Stomach (tissue), 19 donors: ENCODE measurements at regions of chr11 and their contacts with region 1.

Region 1: DNA sequence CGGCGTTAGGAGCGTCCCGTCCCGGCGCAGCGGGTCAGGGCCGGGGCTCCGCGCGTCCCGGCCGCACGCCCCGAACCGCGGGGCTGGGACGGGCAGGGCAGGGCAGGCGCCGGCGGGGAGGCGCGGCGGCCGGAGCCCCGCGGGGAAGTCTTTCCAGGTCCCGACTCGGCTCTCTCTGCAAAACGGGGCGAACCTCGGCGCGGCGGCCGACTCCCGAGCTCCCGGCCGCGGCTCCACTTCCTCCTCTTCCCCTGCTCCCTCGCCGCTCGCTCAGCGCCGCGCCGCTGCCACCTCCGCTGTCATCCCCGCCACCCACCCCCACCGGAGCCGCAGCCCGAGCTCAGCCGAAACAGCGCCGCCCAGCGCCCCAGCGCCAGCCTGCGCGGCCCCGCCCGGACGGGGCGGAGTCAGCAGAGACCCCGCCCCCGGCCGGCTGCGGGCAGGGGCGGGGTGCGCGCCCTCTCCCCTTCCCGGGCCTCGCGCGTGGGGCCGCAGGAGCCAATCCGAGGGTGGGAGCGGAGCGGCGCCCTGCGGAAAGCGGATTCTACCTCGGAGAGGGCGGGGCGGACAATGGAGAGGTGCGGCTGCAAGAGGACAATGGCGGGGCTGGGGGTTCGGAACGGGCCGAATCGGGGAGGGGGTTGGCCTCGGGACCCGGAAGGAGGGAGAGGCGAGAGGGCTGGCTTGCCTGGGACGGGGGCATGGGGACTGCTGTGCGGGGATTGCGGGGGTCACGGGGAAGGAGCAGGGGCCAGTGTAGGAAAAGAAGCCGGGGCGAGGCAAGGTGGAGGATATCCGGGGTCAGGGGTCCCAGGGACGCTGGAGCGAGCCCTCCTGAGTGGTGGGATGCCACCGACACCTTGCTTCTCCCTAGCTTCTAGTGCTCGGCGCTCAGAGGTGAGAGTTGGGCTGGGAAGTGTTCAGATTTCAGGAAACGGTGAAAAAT is at the start of gene GDPD5:
- DNase-seq: peak; percentile 83 to 96
- H3K4me3 ChIP-seq: peak within 1 kb of the TSS; percentile 61 to 80 (median 70)
- H3K27ac ChIP-seq: peak within 1 kb of the TSS in 3 of 5 donors; percentile 20 to 73 (median 58)
- H3K4me1 ChIP-seq: peaks cover 17 to 27% (median 20%) of the 10 kb centered on the region in 4 donors
- H3K27me3 ChIP-seq: peaks cover 0 to 26% (median 12%) of the 10 kb centered on the region in 3 donors
- CTCF ChIP-seq: peak in 3 of 7 experiments; percentile 41 to 82 (median 54)
- EP300 ChIP-seq: no peak
- POLR2A ChIP-seq: no peak
- total RNA-seq, gene GDPD5: 0.58 to 57.6 (median 5.9) TPM

Region 2: DNA sequence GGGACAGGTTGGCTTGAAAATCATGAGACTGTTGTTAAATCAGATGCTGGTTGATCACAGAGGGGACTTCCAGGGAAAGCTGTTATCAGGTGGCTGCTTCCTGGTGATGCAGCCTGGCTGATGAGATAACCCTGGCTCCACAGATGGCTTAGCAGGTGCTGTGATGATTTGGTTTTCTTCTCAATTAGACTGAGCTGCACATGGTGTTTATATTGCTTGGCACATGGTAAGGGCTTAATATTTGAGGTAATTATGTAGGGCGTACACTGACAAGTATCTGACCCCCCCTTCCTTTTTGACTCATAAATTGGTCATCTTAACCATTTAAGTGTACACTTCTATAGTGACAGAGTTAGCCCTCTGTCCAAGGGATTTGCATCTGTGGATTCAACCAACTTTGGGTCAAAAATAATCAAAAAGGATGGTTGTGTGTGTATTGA is 119.5 kb before region 1 on chr11:
- intact Hi-C with region 1: loop called (anchors 5 kb)
- DNase-seq: peak in 1 of 2 donors; percentile 60
- H3K4me3 ChIP-seq: no peak overlapping the region
- H3K27ac ChIP-seq: no peak overlapping the region
- H3K4me1 ChIP-seq: peaks cover 15 to 47% (median 27%) of the 10 kb centered on the region in 4 donors
- H3K27me3 ChIP-seq: no peaks in the 10 kb centered on the region
- CTCF ChIP-seq: no peak
- EP300 ChIP-seq: no peak
- POLR2A ChIP-seq: no peak